ENCODE measurements at regions of chr3 and their contacts with region 1.

Region 1: GRCh38 chr3:160703974-160704373 is 27.0 kb downstream of the ARL14 start:
- DNase-seq: no peak
- H3K4me3 ChIP-seq: no peak overlapping the region
- H3K27ac ChIP-seq: no peak overlapping the region
- H3K4me1 ChIP-seq: no peaks in the 10 kb centered on the region
- H3K27me3 ChIP-seq: no peaks in the 10 kb centered on the region
- CTCF ChIP-seq: no peak
- POLR2A ChIP-seq: no peak

Region 2: GRCh38 chr3:160941885-160942494 is 238.0 kb after region 1 on chr3:
- intact Hi-C with region 1: loop called (anchors 2 kb)
- DNase-seq: no peak
- H3K4me3 ChIP-seq: no peak overlapping the region
- H3K27ac ChIP-seq: no peak overlapping the region
- H3K4me1 ChIP-seq: no peaks in the 10 kb centered on the region
- H3K27me3 ChIP-seq: no peaks in the 10 kb centered on the region
- CTCF ChIP-seq: peak; percentile 40 to 84 (median 78)
- POLR2A ChIP-seq: no peak